Lower leg skin (tissue), 4 donors: ENCODE measurements at regions of chr18 and their contacts with region 1.

Region 1: DNA sequence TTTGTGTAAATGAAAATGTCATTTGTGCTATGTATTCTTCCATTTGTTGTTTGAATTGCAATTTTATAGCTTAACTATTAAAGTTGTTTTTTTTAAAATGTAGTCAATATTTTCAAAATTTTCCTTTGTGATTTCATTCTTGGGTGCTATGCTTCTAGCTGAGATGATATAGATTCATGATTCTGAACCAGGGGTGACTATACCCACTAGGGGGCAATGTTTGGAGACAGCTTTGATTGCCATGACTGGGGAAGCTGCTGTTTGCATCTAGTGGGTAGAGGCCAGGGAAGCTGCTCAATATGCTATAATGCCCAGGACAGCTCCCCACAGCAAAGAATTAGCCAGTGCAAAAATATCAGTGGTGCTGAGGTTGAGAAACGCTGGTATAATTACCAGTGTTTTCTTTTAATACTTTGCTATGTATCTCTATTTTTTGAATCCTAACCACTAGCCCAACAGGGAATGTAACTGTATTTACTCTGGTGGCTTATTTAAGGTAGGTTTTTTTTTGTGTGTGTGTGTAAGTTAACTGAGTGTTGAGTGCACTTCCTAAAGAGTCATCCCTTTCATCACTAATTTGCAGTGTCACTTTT is 99.7 kb downstream of the MEP1B start:
- DNase-seq: peak in 1 of 2 donors; percentile 61
- H3K4me3 ChIP-seq: no peak overlapping the region
- CTCF ChIP-seq: no peak
- POLR2A ChIP-seq: no peak

Region 2: GRCh38 chr18:32317651-32318050 is 28.1 kb after region 1 on chr18:
- intact Hi-C with region 1: no loop called
- DNase-seq: no peak
- H3K4me3 ChIP-seq: no peak overlapping the region
- CTCF ChIP-seq: no peak
- POLR2A ChIP-seq: no peak

Region 3: GRCh38 chr18:32470713-32471633 is 181.4 kb after region 1 on chr18 and contains the start of gene GAREM1:
- intact Hi-C with region 1: loop called (anchors 5 kb)
- DNase-seq: peak; percentile 94 to 98
- H3K4me3 ChIP-seq: peak within 1 kb of the TSS; percentile 53
- CTCF ChIP-seq: no peak
- POLR2A ChIP-seq: no peak
- total RNA-seq, gene GAREM1: 41.1 to 70.9 (median 49.6) TPM